RWPE1 (cell line): ENCODE measurements at regions of chr19 and their contacts with region 1.

Region 1: DNA sequence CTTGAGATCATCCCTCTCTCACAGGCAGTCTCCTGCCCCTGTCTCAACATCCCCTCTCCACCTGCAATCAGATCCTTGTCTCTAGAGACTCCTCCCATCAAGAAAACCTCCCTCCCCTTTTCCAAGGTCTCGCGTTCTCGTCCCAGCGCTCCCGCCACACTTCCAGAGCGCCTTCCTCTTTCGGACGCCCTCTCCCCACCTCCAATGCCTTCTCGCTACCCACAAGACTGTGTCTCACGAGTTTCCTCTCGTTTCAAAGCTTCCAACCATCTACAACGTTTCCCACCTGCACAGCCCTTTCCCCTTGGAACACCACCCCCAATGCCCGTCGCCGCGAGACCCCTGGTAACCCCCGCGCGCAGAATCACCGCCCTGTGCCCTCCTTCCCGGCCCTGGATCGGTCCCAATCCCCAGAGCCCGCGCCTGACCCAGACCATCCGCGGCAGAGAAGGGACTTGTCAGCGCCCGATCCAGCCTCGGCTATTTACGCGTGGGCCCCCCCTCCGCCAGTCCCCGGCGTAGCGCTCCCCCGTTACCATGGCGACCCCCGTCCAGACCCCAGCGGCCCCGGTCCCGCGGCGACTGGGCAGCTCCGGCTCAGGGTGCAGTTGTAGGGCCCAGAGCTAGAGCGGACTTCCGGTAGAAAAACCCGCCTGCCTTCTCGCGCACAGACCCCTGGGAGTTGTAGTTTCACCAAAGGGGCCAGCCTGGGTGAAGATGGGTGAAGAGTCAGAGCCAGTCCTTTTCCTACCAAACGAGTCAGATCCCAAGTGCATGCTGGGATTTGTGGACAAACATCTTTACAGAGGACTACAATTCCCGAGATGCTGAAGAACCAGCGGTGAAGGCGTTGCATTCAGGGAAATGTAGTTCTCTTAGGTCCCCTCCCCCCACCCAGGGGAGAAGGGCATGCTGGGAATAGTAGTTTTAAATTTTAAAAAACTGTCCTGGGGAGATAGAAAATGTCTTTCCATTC is at the start of gene AP2S1:
- DNase-seq: peak; percentile 94
- H3K27ac ChIP-seq: peak within 1 kb of the TSS; percentile 94
- CTCF ChIP-seq: no peak

Region 2: DNA sequence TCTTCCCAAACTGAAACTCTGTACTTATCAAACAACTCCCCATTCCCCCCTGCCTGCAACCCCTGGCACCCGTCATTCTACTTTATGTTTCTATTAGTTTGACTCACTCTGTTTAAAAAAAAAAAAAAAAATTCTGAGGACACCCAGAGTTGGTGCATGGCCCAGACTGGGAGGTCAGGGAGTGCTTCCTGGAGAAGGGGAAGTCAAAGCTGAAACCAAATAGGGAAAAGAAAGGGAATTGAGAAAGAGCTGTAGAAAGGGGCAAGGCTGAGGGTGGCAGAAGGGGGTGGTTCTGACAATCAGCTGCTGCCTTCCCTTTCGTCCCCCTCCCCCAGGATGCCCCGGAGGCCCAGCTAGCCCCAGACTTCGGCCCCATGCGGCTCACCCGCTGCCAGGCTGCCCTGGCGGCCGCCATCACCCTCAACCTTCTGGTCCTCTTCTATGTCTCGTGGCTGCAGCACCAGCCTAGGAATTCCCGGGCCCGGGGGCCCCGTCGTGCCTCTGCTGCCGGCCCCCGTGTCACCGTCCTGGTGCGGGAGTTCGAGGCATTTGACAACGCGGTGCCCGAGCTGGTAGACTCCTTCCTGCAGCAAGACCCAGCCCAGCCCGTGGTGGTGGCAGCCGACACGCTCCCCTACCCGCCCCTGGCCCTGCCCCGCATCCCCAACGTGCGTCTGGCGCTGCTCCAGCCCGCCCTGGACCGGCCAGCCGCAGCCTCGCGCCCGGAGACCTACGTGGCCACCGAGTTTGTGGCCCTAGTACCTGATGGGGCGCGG is 95.3 kb before region 1 on chr19:
- CTCF ChIA-PET with region 1: interaction called, 10 read pairs
- POLR2A ChIA-PET with region 1: no interaction called
- DNase-seq: no peak
- H3K27ac ChIP-seq: peak overlapping the region; percentile 73
- CTCF ChIP-seq: no peak

Region 3: DNA sequence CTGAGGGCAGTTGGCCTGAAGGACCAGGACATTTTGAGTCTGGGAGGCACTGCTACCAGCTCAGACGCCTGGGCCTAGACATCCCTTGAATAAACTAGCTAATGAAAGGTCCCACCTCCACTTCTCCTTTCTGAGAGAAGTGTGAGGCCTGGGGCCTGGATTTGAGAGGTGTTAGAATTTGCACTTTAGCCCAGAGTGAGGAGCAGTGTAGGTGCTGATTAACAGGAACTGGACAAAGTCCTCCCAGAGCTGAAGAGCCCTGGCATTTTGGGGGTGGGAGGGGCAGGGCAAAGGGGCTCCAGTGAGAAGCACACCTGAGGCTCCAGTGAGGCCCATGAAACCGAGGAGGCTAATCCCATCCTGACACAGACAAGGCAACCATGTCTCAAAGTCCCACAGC is 47.0 kb before region 1 on chr19:
- CTCF ChIA-PET with region 1: no interaction called
- POLR2A ChIA-PET with region 1: no interaction called
- DNase-seq: no peak
- H3K27ac ChIP-seq: no peak overlapping the region
- CTCF ChIP-seq: no peak

Region 4: GRCh38 chr19:46898731-46899130 is 48.2 kb after region 1 on chr19:
- CTCF ChIA-PET with region 1: no interaction called
- POLR2A ChIA-PET with region 1: no interaction called
- DNase-seq: peak; percentile 45
- H3K27ac ChIP-seq: peak overlapping the region; percentile 60
- CTCF ChIP-seq: no peak